ENCODE measurements at regions of chr6 and their contacts with region 1.

Region 1: GRCh38 chr6:159862103-159862502 is 28.7 kb upstream of the MAS1 start:
- DNase-seq: no peak
- H3K4me3 ChIP-seq: no peak overlapping the region
- H3K27ac ChIP-seq: no peak overlapping the region
- H3K4me1 ChIP-seq: no peaks in the 10 kb centered on the region
- H3K27me3 ChIP-seq: no peaks in the 10 kb centered on the region
- CTCF ChIP-seq: no peak
- EP300 ChIP-seq: no peak
- POLR2A ChIP-seq: no peak

Region 2: GRCh38 chr6:160041608-160042007 is 179.5 kb after region 1 on chr6:
- intact Hi-C with region 1: no loop called
- DNase-seq: peak; percentile 50 to 69 (median 59)
- H3K4me3 ChIP-seq: no peak overlapping the region
- H3K27ac ChIP-seq: no peak overlapping the region
- H3K4me1 ChIP-seq: peaks cover 6% of the 10 kb centered on the region
- H3K27me3 ChIP-seq: no peaks in the 10 kb centered on the region
- CTCF ChIP-seq: no peak
- EP300 ChIP-seq: no peak
- POLR2A ChIP-seq: no peak

Region 3: DNA sequence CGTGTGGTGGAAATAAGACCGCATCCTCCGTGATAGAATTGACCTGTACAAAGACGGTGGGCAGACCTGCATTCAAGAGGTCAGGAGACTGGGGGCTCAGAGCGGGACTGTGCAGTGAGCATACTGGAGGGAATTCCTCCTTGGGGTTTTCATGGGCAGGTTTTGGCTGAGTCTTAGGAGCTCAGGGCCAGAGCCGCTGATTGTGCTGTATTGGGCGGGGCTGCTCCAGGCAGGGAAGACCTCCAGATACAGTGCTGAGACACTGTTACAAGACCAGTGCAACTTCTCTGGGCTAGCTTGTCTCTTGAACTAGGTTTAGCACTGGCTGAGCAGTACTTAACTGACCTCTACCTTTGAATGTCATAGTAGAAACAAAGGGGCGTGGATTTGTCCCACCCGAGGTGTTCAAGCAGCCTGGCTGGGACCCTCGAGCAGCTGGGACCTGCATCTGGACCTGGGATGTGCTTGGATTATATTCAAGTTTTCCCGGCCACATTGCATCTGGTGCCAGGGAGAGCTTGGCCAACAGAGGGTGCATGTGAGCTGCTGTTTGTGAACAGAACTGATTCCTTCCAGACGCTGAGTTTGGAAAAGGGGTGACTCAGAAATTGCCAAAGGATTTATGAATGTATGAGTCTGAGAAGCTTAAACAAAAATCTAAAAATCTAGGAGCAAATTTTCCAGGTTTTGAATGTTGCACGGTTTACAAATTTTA is 226.1 kb after region 1 on chr6:
- intact Hi-C with region 1: loop called in 1 of 4 experiments (anchors 10 kb)
- DNase-seq: peak; percentile 76 to 85 (median 82)
- H3K4me3 ChIP-seq: no peak overlapping the region
- H3K27ac ChIP-seq: no peak overlapping the region
- H3K4me1 ChIP-seq: no peaks in the 10 kb centered on the region
- H3K27me3 ChIP-seq: no peaks in the 10 kb centered on the region
- CTCF ChIP-seq: peak; percentile 48 to 80 (median 68)
- EP300 ChIP-seq: no peak
- POLR2A ChIP-seq: no peak

Region 4: DNA sequence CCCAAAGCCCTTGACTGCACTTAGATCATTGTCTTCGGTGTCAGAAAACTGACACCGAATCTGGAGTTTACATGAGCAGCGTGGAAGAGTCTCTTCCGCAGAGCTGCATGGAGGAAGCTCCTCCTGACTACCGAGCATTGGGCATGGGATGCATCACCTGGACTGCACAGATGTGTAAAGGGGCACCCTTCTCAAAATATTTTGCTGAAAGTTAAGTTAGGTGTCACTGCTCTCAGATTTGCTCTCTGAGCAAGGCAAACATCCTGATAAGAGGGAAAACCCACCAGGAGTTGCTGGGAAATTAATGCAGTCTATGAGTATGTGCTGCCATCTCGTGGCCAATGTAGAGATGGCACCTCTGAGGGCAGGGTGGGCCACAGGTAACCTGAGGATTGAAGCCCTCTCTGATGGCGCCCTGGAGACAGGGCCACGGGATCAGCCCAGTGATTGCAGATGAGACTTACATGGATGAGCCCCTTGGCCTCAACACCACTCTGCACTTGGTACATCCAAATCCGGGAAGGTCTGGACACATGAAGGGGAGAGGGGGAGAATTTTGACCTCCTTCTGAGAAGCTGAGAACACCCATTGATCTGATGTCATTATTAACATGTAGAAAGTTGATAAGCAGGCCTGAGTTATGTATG is 672.1 kb after region 1 on chr6:
- intact Hi-C with region 1: loop called in 2 of 4 experiments (anchors 5 to 10 kb)
- DNase-seq: peak; percentile 28 to 73 (median 68)
- H3K4me3 ChIP-seq: no peak overlapping the region
- H3K27ac ChIP-seq: no peak overlapping the region
- H3K4me1 ChIP-seq: peaks cover 2% of the 10 kb centered on the region
- H3K27me3 ChIP-seq: no peaks in the 10 kb centered on the region
- CTCF ChIP-seq: peak; percentile 81 to 86 (median 85)
- EP300 ChIP-seq: no peak
- POLR2A ChIP-seq: no peak

Measured in ovary (tissue), 10 donors.